Prostate gland (tissue), 2 donors: ENCODE measurements at regions of chr12 and their contacts with region 1.

Region 1: DNA sequence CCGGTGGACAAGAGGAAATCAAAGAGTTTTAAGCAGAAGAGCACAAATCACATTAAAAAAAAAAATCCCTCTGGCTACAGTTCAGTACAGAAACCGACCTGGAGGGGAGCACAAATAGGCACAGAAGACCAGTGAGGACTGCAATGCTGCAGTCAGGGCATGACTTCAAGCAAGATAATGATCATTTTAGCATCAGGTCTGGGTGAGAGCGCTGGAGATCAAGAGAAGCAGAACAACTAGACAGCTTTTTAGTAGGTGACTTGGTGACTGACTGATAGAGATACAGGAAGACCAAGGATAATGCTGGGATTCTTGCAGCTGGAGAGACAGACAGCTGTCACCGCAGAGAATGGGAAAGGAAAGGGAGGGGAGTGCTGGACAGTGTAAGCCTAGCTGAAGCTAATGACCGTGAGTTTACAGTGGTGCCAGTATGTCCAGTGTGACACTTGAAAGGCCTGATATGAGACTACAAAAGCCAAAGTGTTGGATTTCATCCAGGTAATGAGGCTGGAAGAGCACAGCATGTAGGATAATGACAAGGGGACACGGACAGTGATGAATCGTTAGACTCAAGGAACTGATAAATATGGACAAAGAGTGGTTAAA is 5.6 kb downstream of the NFYB start:
- DNase-seq: peak; percentile 18
- H3K4me3 ChIP-seq: no peak overlapping the region
- H3K27ac ChIP-seq: peak overlapping the region; percentile 28 to 37
- H3K4me1 ChIP-seq: peaks cover 19% of the 10 kb centered on the region
- H3K27me3 ChIP-seq: no peaks in the 10 kb centered on the region
- CTCF ChIP-seq: no peak
- POLR2A ChIP-seq: no peak

Region 2: GRCh38 chr12:104230304-104231095 is 98.0 kb after region 1 on chr12:
- intact Hi-C with region 1: no loop called
- DNase-seq: no peak
- H3K4me3 ChIP-seq: no peak overlapping the region
- H3K27ac ChIP-seq: no peak overlapping the region
- H3K4me1 ChIP-seq: no peaks in the 10 kb centered on the region
- H3K27me3 ChIP-seq: no peaks in the 10 kb centered on the region
- CTCF ChIP-seq: no peak
- POLR2A ChIP-seq: no peak

Region 3: DNA sequence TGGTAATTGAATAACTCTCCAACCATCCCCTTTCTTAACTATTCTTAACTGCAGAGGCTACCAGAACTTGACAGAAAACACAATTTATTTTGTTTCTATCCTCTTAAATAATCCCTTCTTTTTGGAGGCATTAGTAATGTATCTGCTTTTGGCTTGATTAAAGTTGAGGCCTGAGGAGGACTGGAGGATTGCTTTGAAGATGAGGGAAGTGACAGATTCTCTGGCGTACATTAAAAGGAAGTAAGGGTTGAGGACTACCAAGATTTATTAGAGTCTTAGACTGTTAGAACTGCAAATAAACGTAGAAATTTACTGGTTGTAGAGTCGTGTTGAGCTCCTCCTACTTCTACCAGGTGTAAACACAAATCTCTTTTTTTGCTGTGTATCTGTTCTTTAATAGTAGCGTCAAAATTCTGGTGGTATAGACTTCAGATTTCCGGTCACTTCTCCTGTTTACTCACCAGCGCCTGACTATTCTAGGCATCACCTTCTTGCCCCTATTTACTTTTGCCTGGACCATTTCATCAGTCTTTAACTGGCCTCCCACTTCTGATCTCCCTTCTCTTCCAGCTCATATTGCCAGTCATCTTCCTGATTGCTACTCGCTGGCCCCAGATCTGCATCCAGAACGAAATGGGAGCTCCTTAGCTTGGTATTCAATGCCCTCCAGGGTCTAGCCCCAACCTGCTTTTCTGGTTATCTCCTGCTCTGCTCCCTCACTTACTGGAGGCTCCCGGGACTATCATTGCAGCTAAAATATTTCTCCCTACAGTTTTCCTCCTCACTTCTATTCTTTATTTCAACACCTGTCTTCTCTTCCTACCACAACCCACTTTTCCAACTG is 162.6 kb after region 1 on chr12:
- intact Hi-C with region 1: loop called (anchors 5 kb)
- DNase-seq: no peak
- H3K4me3 ChIP-seq: no peak overlapping the region
- H3K27ac ChIP-seq: no peak overlapping the region
- H3K4me1 ChIP-seq: peaks cover 6% of the 10 kb centered on the region
- H3K27me3 ChIP-seq: no peaks in the 10 kb centered on the region
- CTCF ChIP-seq: no peak
- POLR2A ChIP-seq: no peak